Right lobe of liver (tissue), 6 donors: ENCODE measurements at regions of chr17 and their contacts with region 1.

Region 1: GRCh38 chr17:7912927-7913524 is 3.1 kb downstream of the RNF227 start:
- DNase-seq: no peak
- ATAC-seq: peak; percentile 51 to 60 (median 58)
- H3K4me3 ChIP-seq: no peak overlapping the region
- H3K27ac ChIP-seq: no peak overlapping the region
- H3K4me1 ChIP-seq: peaks cover 0 to 10% (median 0%) of the 10 kb centered on the region in 4 donors
- H3K27me3 ChIP-seq: no peaks in the 10 kb centered on the region
- CTCF ChIP-seq: peak; percentile 60 to 70 (median 68)
- POLR2A ChIP-seq: no peak

Region 2: DNA sequence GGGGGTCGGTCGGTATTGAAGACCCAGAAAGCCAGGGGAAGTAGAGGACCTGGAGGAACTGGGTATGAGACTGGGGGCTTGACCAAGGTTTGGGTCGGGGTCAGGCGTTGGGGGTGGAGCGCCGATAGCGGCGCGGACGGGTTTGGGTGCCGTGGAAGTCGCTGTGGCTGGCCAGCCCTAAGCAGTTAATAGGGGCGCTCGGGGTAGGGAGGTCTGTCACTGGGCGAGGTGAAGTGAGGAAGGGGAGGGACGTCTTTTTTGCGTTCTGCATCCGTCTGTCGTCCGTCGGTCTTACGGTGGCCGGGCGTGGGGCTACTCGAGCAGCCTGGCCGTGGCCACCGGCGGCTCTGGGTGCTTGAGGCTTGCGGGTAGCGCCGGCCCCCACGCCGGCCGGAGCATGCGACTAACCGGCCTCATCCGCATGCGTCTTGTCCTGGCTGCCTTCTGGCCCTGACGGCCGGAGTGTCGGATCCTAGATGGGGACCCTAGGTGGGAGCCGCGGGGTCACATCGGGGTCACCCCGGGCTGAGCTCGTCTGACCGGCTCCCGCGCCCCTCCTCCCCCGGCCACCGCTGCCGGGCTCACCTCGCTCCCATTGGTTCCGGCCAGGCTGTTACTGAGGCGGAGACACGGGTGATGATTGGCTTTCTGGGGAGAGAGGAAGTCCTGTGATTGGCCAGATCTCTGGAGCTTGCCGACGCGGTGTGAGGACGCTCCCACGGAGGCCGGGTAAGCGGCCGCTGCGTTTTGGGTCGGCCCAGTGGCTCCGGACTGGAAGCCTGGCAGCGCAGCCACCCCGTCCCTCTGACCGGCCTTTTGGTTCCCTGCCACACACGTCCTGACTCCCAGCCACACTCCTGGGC is 68.5 kb before region 1 on chr17:
- intact Hi-C with region 1: no loop called
- DNase-seq: peak; percentile 93 to 96 (median 94)
- ATAC-seq: peak; percentile 48 to 75 (median 66)
- H3K4me3 ChIP-seq: peak overlapping the region; percentile 73 to 98 (median 81)
- H3K27ac ChIP-seq: peak overlapping the region; percentile 99
- H3K4me1 ChIP-seq: peaks cover 0 to 24% (median 10%) of the 10 kb centered on the region in 4 donors
- H3K27me3 ChIP-seq: no peaks in the 10 kb centered on the region
- CTCF ChIP-seq: no peak
- POLR2A ChIP-seq: peak; percentile 86

Region 3: GRCh38 chr17:7951143-7951803 is 38.2 kb after region 1 on chr17:
- intact Hi-C with region 1: no loop called
- DNase-seq: no peak
- ATAC-seq: no peak
- H3K4me3 ChIP-seq: no peak overlapping the region
- H3K27ac ChIP-seq: no peak overlapping the region
- H3K4me1 ChIP-seq: no peaks in the 10 kb centered on the region
- H3K27me3 ChIP-seq: no peaks in the 10 kb centered on the region
- CTCF ChIP-seq: no peak
- POLR2A ChIP-seq: no peak

Region 4: DNA sequence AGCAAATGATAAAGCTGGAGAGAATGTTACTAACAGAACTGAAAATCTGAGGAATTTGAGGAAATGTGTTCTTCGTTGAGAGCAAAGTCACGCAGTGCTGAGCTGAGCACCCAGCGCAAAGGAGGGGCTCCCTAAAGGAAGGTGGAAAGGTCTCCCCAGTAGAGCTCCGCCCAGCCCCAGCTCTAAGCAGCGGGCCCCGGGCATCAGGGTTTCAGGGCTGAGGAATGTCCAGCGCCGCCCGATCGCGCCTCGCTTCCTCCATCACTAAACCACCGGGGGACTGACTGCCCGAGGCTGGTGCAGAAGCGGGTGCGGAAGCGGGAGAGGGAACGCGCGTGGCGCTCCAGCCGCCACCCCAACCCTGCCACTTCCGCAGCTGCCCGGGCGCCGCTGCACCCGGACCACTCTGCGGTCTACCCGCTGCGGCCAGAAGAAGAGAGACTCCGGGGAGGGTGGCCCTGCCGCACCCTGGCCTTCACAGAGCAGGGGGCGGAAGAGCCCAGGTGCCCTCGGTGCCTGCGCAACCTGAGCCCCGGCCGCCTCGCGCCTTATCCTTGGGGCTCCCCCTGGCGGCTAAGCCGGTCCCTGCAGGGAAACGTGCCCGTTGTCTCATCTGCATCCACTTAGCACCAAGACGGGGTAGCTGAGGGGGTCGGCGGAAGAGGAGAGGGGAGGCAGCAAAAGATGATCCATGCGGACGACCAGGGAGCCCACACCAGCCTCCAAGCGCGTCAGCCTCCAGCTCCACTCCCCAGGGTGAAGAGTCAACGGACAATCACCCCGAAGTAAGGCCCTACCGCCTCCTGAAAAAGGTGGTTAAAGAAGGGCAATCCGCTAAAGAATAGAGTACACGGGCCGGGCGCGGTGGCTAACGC is 77.0 kb after region 1 on chr17:
- intact Hi-C with region 1: loop called in 1 of 2 experiments (anchors 5 kb)
- DNase-seq: peak; percentile 83 to 85 (median 85)
- ATAC-seq: peak; percentile 93 to 97 (median 96)
- H3K4me3 ChIP-seq: peak overlapping the region; percentile 54 to 58 (median 56)
- H3K27ac ChIP-seq: peak overlapping the region in 1 of 3 donors; percentile 63
- H3K4me1 ChIP-seq: peaks cover 0 to 5% (median 0%) of the 10 kb centered on the region in 4 donors
- H3K27me3 ChIP-seq: no peaks in the 10 kb centered on the region
- CTCF ChIP-seq: peak; percentile 92 to 99 (median 96)
- POLR2A ChIP-seq: no peak